PC-9 (cell line): ENCODE measurements at regions of chr1 and their contacts with region 1.

Region 1: GRCh38 chr1:10387413-10388079 is 11.3 kb upstream of the PGD start:
- DNase-seq: peak in 1 of 2 experiments; percentile 63
- H3K4me3 ChIP-seq: peak overlapping the region; percentile 9; the same call in 1 of the 2 replicates
- H3K27ac ChIP-seq: peak overlapping the region; percentile 96
- H3K4me1 ChIP-seq: peaks cover 23% of the 10 kb centered on the region
- H3K27me3 ChIP-seq: no peaks in the 10 kb centered on the region
- CTCF ChIP-seq: no peak

Region 2: GRCh38 chr1:9842781-9843577 is 544.6 kb before region 1 on chr1:
- CTCF ChIA-PET with region 1: no interaction called
- POLR2A ChIA-PET with region 1: interaction called, 12 read pairs
- intact Hi-C with region 1: no loop called
- DNase-seq: peak in 1 of 2 experiments; percentile 34
- H3K4me3 ChIP-seq: no peak overlapping the region
- H3K27ac ChIP-seq: no peak overlapping the region
- H3K4me1 ChIP-seq: peaks cover 16% of the 10 kb centered on the region
- H3K27me3 ChIP-seq: no peaks in the 10 kb centered on the region
- CTCF ChIP-seq: no peak

Region 3: GRCh38 chr1:10085061-10085460 is 302.5 kb before region 1 on chr1:
- CTCF ChIA-PET with region 1: interaction called, 19 read pairs
- POLR2A ChIA-PET with region 1: no interaction called
- intact Hi-C with region 1: no loop called
- DNase-seq: peak in 1 of 2 experiments; percentile 20
- H3K4me3 ChIP-seq: no peak overlapping the region
- H3K27ac ChIP-seq: no peak overlapping the region
- H3K4me1 ChIP-seq: no peaks in the 10 kb centered on the region
- H3K27me3 ChIP-seq: no peaks in the 10 kb centered on the region
- CTCF ChIP-seq: no peak

Region 4: GRCh38 chr1:10195570-10195969 is 192.0 kb before region 1 on chr1:
- CTCF ChIA-PET with region 1: no interaction called
- POLR2A ChIA-PET with region 1: no interaction called
- intact Hi-C with region 1: no loop called
- DNase-seq: peak; percentile 69 to 80
- H3K4me3 ChIP-seq: no peak overlapping the region
- H3K27ac ChIP-seq: no peak overlapping the region
- H3K4me1 ChIP-seq: peaks cover 3% of the 10 kb centered on the region; the same call in 1 of the 2 replicates
- H3K27me3 ChIP-seq: no peaks in the 10 kb centered on the region
- CTCF ChIP-seq: no peak

Region 5: GRCh38 chr1:10398734-10399623 is 11.4 kb after region 1 on chr1 and contains the start of gene PGD:
- CTCF ChIA-PET with region 1: no interaction called
- POLR2A ChIA-PET with region 1: interaction called, 8 read pairs
- intact Hi-C with region 1: loop called (anchors 1 kb)
- DNase-seq: peak; percentile 88 to 98
- H3K4me3 ChIP-seq: peak within 1 kb of the TSS; percentile 94
- H3K27ac ChIP-seq: peak within 1 kb of the TSS; percentile 89
- H3K4me1 ChIP-seq: peaks cover 25% of the 10 kb centered on the region
- H3K27me3 ChIP-seq: no peaks in the 10 kb centered on the region
- CTCF ChIP-seq: no peak
- total RNA-seq, gene PGD: 526 and 559 TPM in 2 replicates

Region 6: GRCh38 chr1:10615332-10615731 is 227.8 kb after region 1 on chr1:
- CTCF ChIA-PET with region 1: no interaction called
- POLR2A ChIA-PET with region 1: no interaction called
- intact Hi-C with region 1: no loop called
- DNase-seq: no peak
- H3K4me3 ChIP-seq: no peak overlapping the region
- H3K27ac ChIP-seq: no peak overlapping the region
- H3K4me1 ChIP-seq: no peaks in the 10 kb centered on the region
- H3K27me3 ChIP-seq: no peaks in the 10 kb centered on the region
- CTCF ChIP-seq: no peak